ENCODE measurements at regions of chr1 and their contacts with region 1.

Region 1: DNA sequence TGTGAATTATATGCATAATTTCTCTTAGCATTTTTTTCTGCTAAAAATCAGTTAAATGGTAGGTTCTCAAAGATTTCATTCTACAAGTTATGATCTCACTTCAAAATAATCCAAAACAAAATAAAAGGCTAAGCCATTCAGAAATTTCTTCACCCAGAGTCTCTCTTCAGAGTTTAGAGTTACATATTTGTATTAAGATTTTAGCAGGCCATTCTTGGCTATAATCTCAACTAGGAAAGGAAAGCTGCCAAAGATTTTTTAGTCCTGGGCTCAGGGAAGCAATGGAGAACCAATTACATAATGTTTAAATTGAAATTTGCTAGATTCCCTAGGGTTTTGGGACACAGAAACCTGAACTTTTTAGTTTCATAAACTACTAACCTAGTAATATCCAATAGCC is 245.0 kb downstream of the USH2A start:
- DNase-seq: no peak
- H3K4me3 ChIP-seq: no peak overlapping the region
- H3K27ac ChIP-seq: no peak overlapping the region
- H3K4me1 ChIP-seq: no peaks in the 10 kb centered on the region
- H3K27me3 ChIP-seq: peaks cover 74% of the 10 kb centered on the region
- CTCF ChIP-seq: no peak

Region 2: DNA sequence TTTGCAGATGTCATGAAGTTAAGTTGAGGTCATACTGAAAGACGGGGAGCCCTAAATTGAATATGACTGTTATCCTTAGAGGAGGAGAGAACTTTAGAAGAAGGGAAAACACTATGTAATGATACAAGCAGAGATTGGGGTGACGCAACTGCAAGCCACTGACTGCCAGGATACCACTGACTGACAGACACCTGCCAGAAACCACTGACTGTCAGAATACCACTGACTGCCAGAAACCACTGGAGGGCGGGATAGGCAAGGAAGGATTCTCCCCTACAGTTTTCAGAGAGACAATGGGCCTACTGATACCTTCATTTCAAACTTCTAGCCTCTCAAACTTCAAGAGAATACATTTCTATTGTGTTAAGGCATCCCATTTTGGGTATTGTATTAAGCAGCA is 143.8 kb before region 1 on chr1:
- CTCF ChIA-PET with region 1: no interaction called
- POLR2A ChIA-PET with region 1: no interaction called
- intact Hi-C with region 1: loop called (anchors 10 kb)
- DNase-seq: peak; percentile 31
- H3K4me3 ChIP-seq: no peak overlapping the region
- H3K27ac ChIP-seq: no peak overlapping the region
- H3K4me1 ChIP-seq: no peaks in the 10 kb centered on the region
- H3K27me3 ChIP-seq: peaks cover 11% of the 10 kb centered on the region
- CTCF ChIP-seq: peak; percentile 58